Gastrocnemius medialis (tissue), 4 donors: ENCODE measurements at regions of chr19 and their contacts with region 1.

Region 1: GRCh38 chr19:5622463-5623396 is at the starts of genes SAFB and SAFB2:
- DNase-seq: peak; percentile 98 to 100
- ATAC-seq: peak; percentile 86 to 91
- H3K4me3 ChIP-seq: peak within 1 kb of the TSS; percentile 79 to 95 (median 82)
- H3K27ac ChIP-seq: peak within 1 kb of the TSS; percentile 96 to 98 (median 98)
- H3K4me1 ChIP-seq: peaks cover 60 to 64% of the 10 kb centered on the region in 2 donors
- H3K27me3 ChIP-seq: no peaks in the 10 kb centered on the region
- CTCF ChIP-seq: no peak
- POLR2A ChIP-seq: peak; percentile 98 to 99
- total RNA-seq, gene SAFB: 29.8 to 60.0 (median 56.1) TPM
- total RNA-seq, gene SAFB2: 13.7 to 19.8 (median 18.4) TPM

Region 2: GRCh38 chr19:5680437-5681368 is 58.0 kb after region 1 on chr19 and contains the starts of genes HSD11B1L and MICOS13:
- in situ Hi-C with region 1: loop called in 2 of 4 experiments (anchors 10 kb)
- intact Hi-C with region 1: loop called (anchors 1 kb)
- DNase-seq: peak; percentile 98 to 99
- ATAC-seq: peak; percentile 92 to 93
- H3K4me3 ChIP-seq: peak within 1 kb of the TSS; percentile 72 to 93 (median 81)
- H3K27ac ChIP-seq: peak within 1 kb of the TSS; percentile 92 to 96 (median 94)
- H3K4me1 ChIP-seq: peaks cover 17 to 22% of the 10 kb centered on the region in 2 donors
- H3K27me3 ChIP-seq: no peaks in the 10 kb centered on the region
- CTCF ChIP-seq: peak in 1 of 5 experiments; percentile 16
- POLR2A ChIP-seq: peak; percentile 70 to 79
- total RNA-seq, gene HSD11B1L: 5.8 to 33.2 (median 21.5) TPM
- total RNA-seq, gene MICOS13: 45.7 to 122 (median 74.8) TPM

Region 3: DNA sequence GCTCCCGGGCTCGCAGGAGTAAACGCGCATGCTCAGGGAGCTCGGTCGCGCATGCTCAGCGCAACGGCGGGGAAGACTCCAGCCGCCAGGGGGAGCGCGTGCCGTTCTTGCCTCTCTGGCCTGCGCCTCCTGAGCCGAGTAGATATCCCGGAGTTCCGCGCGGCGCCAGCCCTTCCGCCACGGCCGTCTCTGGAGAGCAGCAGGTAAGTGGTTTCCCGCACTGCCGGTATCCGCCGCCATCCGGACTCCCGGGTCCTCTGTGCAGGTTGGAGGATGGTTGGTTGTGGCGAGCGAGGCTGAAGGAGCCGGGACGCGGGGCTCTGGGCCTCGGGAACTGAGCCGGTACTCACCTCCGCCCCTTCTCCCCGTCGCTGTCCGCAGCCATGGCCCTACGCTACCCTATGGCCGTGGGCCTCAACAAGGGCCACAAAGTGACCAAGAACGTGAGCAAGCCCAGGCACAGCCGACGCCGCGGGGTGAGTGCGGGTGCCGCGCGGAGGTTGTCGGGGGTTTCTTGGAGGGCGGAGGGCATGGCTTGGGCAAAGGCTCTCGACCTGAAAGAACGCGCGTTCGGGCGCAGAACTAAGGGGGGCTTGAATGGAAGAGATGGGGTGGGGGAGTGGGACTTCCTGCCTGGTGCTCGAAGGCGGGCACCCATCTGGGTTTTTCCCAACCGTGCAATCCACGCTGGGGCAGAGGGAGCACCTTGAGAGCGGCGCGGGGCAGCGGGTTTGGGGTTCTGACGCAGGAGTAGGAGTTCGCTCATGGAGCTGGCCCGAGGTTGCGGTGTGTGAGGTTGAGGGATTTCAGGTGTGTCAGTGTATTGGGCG is 67.6 kb after region 1 on chr19 and contains the start of gene RPL36:
- in situ Hi-C with region 1: loop called in 1 of 4 experiments (anchors 10 kb)
- intact Hi-C with region 1: no loop called
- DNase-seq: peak; percentile 96
- ATAC-seq: peak; percentile 76 to 77
- H3K4me3 ChIP-seq: peak within 1 kb of the TSS; percentile 71 to 93 (median 84)
- H3K27ac ChIP-seq: peak within 1 kb of the TSS; percentile 83 to 94 (median 86)
- H3K4me1 ChIP-seq: peaks cover 21 to 25% of the 10 kb centered on the region in 2 donors
- H3K27me3 ChIP-seq: no peaks in the 10 kb centered on the region
- CTCF ChIP-seq: peak; percentile 94 to 98 (median 95)
- POLR2A ChIP-seq: peak; percentile 86 to 91
- total RNA-seq, gene RPL36: 329 to 784 (median 462) TPM

Region 4: DNA sequence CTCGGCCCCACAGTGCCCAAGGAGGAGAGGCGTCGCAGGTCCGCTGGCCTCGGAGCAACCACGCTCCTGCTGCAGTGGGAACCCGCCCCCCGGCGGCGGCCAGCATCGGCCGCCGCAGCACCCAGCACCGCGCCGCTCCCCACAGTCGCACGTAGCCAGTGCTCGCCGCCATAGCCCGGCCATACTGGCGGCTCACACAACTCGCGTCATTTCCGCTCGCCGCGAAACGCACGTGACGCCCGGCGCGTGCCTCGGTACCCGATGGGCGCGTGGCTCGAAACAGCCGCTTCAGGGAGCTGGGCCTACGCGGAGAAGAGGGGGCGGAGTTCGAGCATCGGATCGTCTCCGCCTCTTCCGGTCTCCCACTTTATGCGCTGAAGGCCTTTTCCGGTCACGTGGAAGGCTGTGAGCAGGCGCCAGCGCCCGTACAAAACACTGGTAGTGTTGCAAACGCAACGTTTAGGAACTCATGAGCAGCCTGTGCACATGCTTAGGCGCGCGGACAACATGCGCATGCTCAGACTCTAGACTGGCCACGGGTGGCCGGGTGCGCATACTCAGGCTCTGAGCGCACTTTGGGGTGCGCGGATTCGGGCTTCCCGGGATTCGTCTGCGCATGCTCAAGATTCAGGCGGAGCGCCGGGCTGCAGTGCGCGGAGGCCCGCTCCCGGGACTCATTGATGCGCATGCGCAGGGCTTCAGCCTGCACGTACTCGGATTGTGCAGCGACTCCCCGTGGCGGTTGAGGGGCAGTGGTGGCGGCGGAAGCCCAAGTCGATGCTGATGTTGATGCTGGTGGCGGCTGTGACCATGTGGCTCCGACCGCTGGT is 97.4 kb after region 1 on chr19 and contains the starts of genes CATSPERD and LONP1:
- in situ Hi-C with region 1: no loop called
- intact Hi-C with region 1: loop called (anchors 2 kb)
- DNase-seq: peak; percentile 98
- ATAC-seq: peak; percentile 97 to 99
- H3K4me3 ChIP-seq: peak within 1 kb of the TSS; percentile 73 to 93 (median 84)
- H3K27ac ChIP-seq: peak within 1 kb of the TSS; percentile 92 to 99 (median 96)
- H3K4me1 ChIP-seq: peaks cover 18 to 31% of the 10 kb centered on the region in 2 donors
- H3K27me3 ChIP-seq: no peaks in the 10 kb centered on the region
- CTCF ChIP-seq: peak; percentile 86 to 95 (median 94)
- POLR2A ChIP-seq: peak; percentile 76 to 89
- total RNA-seq, gene CATSPERD: not detected
- total RNA-seq, gene LONP1: 33.1 to 77.7 (median 70.4) TPM

Region 5: GRCh38 chr19:5790573-5791520 is 168.1 kb after region 1 on chr19 and contains the start of gene DUS3L:
- in situ Hi-C with region 1: no loop called
- intact Hi-C with region 1: loop called (anchors 5 kb)
- DNase-seq: peak; percentile 96 to 98
- ATAC-seq: peak; percentile 95 to 96
- H3K4me3 ChIP-seq: peak within 1 kb of the TSS; percentile 78 to 94 (median 86)
- H3K27ac ChIP-seq: peak within 1 kb of the TSS; percentile 96 to 99 (median 98)
- H3K4me1 ChIP-seq: peaks cover 7 to 8% of the 10 kb centered on the region in 2 donors
- H3K27me3 ChIP-seq: peaks cover 0 to 4% (median 0%) of the 10 kb centered on the region in 3 donors
- CTCF ChIP-seq: peak in 1 of 5 experiments; percentile 24
- POLR2A ChIP-seq: peak; percentile 72 to 73
- total RNA-seq, gene DUS3L: 19.5 to 45.9 (median 25.0) TPM

Region 6: DNA sequence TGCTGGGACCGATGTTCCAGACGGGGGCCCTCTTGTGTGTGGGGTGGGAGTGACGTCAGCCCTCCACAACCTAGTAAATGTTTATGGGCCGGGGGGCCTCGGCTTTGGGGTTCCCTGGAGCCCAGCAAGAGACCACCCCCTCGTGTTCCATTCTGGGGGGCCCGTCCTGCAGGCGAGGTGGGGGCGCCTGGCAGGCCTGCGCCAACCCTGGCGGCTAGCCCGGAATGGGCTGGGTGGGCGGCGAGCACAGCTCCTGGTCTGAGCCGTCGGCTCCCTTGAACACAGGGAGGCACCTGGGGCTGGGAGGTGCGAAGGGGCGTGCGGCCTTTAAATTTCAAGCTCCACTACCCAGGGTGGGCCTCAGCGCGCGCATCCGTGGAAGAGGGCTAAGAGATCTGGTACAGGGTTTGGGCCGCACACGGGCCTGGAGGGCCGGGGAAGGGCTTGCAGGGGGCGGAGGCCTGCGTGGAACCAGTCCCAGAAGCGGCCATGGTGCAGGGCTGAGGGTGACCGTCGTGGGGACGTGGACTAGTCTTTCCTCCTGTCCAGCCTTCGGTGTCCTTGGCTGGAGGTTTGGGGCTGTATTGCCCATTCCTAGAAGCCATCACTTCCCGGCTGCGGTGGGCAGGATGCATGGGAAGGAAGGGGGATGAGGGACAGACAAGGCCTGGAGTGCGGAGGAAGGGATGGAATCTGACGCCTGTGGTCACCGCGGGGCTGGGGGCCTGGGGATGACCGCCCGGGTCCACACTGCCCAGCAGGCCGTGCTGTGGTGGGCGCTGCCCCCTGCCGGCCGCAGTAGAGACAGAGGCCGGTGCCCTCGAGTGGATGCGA is 269.4 kb after region 1 on chr19:
- in situ Hi-C with region 1: no loop called
- intact Hi-C with region 1: no loop called
- DNase-seq: no peak
- ATAC-seq: peak in 1 of 2 donors; percentile 23
- H3K4me3 ChIP-seq: no peak overlapping the region
- H3K27ac ChIP-seq: no peak overlapping the region
- H3K4me1 ChIP-seq: peaks cover 0 to 11% of the 10 kb centered on the region in 2 donors
- H3K27me3 ChIP-seq: peaks cover 26 to 45% (median 30%) of the 10 kb centered on the region in 3 donors
- CTCF ChIP-seq: peak in 4 of 5 experiments; percentile 14 to 56 (median 46)
- POLR2A ChIP-seq: no peak

Region 7: GRCh38 chr19:5977785-5978605 is 355.3 kb after region 1 on chr19 and contains the start of gene RANBP3:
- in situ Hi-C with region 1: no loop called
- intact Hi-C with region 1: loop called (anchors 5 kb)
- DNase-seq: peak; percentile 97 to 99
- ATAC-seq: peak; percentile 95 to 96
- H3K4me3 ChIP-seq: peak within 1 kb of the TSS; percentile 73 to 100 (median 88)
- H3K27ac ChIP-seq: peak within 1 kb of the TSS; percentile 84 to 93 (median 90)
- H3K4me1 ChIP-seq: peaks cover 29 to 40% of the 10 kb centered on the region in 2 donors
- H3K27me3 ChIP-seq: no peaks in the 10 kb centered on the region
- CTCF ChIP-seq: no peak
- POLR2A ChIP-seq: peak; percentile 49 to 63
- total RNA-seq, gene RANBP3: 37.4 to 74.3 (median 61.3) TPM